Esophagus squamous epithelium (tissue), 5 donors: ENCODE measurements at regions of chr18 and their contacts with region 1.

Region 1: DNA sequence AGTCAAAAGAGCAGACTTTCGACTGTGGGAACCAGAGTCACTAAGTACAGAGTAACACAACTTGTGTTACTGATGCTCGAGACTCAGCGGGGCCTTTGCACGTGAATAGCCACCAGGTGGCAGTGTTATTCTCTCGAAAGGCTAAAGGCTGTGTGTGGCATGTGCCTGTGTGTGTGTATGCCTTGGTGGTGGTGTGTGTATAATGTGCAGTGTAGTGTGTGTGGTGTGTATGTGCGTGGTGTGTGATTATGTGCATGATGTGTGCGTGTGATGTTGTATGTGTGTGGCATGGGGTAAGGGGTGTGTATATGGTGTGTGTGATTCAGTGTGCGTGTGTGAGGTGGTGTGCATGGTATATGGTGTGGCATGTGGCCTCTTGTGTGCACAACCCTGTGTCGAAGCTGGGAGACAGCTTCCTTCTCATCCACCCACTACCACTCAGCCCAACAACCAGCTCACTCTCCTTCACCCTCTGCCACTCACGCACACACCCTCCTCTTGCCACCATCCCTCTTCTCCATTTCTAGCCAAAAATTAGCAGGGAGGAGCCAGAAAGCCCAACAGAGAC is 83.0 kb upstream of the ZNF532 start:
- DNase-seq: peak; percentile 3
- H3K4me3 ChIP-seq: no peak overlapping the region
- H3K27ac ChIP-seq: no peak overlapping the region
- H3K4me1 ChIP-seq: peaks cover 13 to 25% (median 13%) of the 10 kb centered on the region in 3 donors
- H3K27me3 ChIP-seq: no peaks in the 10 kb centered on the region
- CTCF ChIP-seq: peak; percentile 70 to 94 (median 90)
- POLR2A ChIP-seq: no peak

Region 2: GRCh38 chr18:58858616-58859468 is 77.1 kb after region 1 on chr18:
- intact Hi-C with region 1: loop called (anchors 10 kb)
- DNase-seq: no peak
- H3K4me3 ChIP-seq: no peak overlapping the region
- H3K27ac ChIP-seq: peak overlapping the region in 3 of 4 donors; percentile 47 to 64 (median 63)
- H3K4me1 ChIP-seq: peaks cover 10 to 50% (median 15%) of the 10 kb centered on the region in 3 donors
- H3K27me3 ChIP-seq: no peaks in the 10 kb centered on the region
- CTCF ChIP-seq: no peak
- POLR2A ChIP-seq: no peak

Region 3: GRCh38 chr18:59056706-59057492 is 275.2 kb after region 1 on chr18:
- intact Hi-C with region 1: loop called (anchors 5 kb)
- DNase-seq: no peak
- H3K4me3 ChIP-seq: no peak overlapping the region
- H3K27ac ChIP-seq: no peak overlapping the region
- H3K4me1 ChIP-seq: no peaks in the 10 kb centered on the region
- H3K27me3 ChIP-seq: no peaks in the 10 kb centered on the region
- CTCF ChIP-seq: peak; percentile 46 to 89 (median 82)
- POLR2A ChIP-seq: no peak

Region 4: DNA sequence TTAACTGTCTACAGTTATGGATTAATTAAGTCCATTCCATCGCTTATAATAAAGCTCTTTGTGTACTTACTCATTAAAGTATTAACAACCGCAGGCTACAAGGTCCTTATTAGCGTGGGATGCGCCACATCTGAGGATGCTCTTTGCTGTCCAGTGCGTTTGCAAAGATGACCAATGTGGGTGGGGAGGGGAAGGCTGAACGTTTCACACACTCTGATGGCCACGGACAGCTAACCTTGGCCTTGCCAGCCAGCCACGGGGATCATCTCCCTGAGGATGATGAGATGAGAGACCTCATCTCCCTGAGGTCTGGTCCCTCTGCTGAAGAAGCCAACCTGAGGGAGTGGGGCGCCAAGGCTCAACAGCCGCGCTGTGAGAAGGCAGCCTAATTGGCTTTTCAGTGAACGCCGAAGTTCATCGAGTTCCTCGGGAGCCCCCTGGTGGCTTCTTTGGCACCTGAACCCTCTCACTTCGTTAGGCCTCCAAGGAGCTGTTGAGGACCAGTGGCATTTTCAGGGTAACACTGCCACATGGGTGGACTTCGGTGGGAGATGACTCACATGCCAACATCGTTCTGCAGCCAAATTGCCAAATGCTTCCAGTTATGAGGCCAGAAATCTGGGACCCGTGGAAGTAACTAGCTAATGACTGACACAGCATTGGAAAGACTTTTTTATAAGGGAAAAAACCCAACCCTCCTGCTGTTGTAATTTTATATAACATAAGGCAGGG is 288.6 kb after region 1 on chr18:
- intact Hi-C with region 1: loop called (anchors 5 kb)
- DNase-seq: no peak
- H3K4me3 ChIP-seq: no peak overlapping the region
- H3K27ac ChIP-seq: no peak overlapping the region
- H3K4me1 ChIP-seq: no peaks in the 10 kb centered on the region
- H3K27me3 ChIP-seq: no peaks in the 10 kb centered on the region
- CTCF ChIP-seq: peak; percentile 71 to 85 (median 80)
- POLR2A ChIP-seq: no peak